PC-9 (cell line): ENCODE measurements at regions of chr17 and their contacts with region 1.

Region 1: GRCh38 chr17:44385287-44386181 is 3.9 kb downstream of the ITGA2B start:
- DNase-seq: peak; percentile 57 to 86
- H3K4me3 ChIP-seq: peak overlapping the region; percentile 63
- H3K27ac ChIP-seq: no peak overlapping the region
- H3K4me1 ChIP-seq: no peaks in the 10 kb centered on the region
- H3K27me3 ChIP-seq: no peaks in the 10 kb centered on the region
- CTCF ChIP-seq: no peak

Region 2: DNA sequence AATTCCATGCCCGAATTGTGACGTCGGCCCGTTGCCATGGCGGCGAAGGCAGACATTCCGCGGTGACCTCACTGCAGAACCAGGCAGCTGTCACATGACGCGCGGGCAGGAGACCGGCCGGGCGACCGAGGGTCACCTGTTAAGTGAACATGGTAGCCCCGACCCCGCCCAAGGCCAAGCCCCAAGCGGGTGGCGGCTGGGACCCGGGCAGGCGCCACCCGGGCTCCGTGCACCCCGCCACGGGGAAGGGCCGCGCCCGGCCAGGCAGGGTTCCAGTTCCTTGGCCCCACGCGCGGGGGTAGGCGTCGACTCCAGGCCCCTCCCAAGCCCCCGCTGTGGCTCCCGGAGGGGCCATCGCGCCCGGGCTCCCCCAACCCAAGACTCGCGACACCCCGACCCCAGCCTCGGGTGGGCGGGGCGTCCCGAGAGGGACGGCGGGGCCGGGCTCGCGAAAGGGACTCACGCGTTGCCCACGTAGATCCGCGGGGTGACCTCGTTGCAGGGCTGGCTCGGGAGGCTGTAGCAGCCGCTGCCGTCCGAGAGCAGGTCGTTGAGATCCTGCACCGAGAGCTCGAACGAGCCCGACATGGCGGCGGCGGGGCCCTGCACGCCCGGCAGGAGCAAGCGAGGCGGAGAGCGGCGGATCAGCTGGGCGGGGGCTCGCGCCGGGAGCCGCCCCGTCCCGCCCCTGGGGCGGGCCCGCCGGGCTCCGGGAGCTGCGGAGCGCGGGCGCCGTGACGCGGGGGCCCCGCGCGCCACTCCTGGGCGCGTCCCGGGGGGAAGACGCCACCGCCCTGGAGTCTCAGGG is 607.0 kb before region 1 on chr17 and contains the start of gene DUSP3:
- CTCF ChIA-PET with region 1: no interaction called
- POLR2A ChIA-PET with region 1: interaction called, 13 read pairs
- intact Hi-C with region 1: no loop called
- DNase-seq: peak; percentile 89 to 94
- H3K4me3 ChIP-seq: peak within 1 kb of the TSS; percentile 81
- H3K27ac ChIP-seq: peak within 1 kb of the TSS; percentile 76
- H3K4me1 ChIP-seq: peaks cover 14% of the 10 kb centered on the region
- H3K27me3 ChIP-seq: peaks cover 20% of the 10 kb centered on the region; the same call in 1 of the 2 replicates
- CTCF ChIP-seq: no peak
- total RNA-seq, gene DUSP3: 37.2 and 38.4 TPM in 2 replicates

Region 3: GRCh38 chr17:43958953-43959352 is 426.6 kb before region 1 on chr17:
- CTCF ChIA-PET with region 1: no interaction called
- POLR2A ChIA-PET with region 1: interaction called, 22 read pairs
- intact Hi-C with region 1: no loop called
- DNase-seq: peak in 1 of 2 experiments; percentile 47
- H3K4me3 ChIP-seq: no peak overlapping the region
- H3K27ac ChIP-seq: no peak overlapping the region
- H3K4me1 ChIP-seq: no peaks in the 10 kb centered on the region
- H3K27me3 ChIP-seq: peaks cover 8% of the 10 kb centered on the region; the same call in 1 of the 2 replicates
- CTCF ChIP-seq: no peak

Region 4: GRCh38 chr17:44363613-44364159 is 21.8 kb before region 1 on chr17 and contains the start of gene FAM171A2:
- CTCF ChIA-PET with region 1: interaction called, 12 read pairs
- POLR2A ChIA-PET with region 1: no interaction called
- intact Hi-C with region 1: no loop called
- DNase-seq: peak in 1 of 2 experiments; percentile 61
- H3K4me3 ChIP-seq: peak within 1 kb of the TSS; percentile 66
- H3K27ac ChIP-seq: no peak within 1 kb of the TSS
- H3K4me1 ChIP-seq: no peaks in the 10 kb centered on the region
- H3K27me3 ChIP-seq: peaks cover 18% of the 10 kb centered on the region; the same call in 1 of the 2 replicates
- CTCF ChIP-seq: peak; percentile 59; the same call in 1 of the 2 replicates
- total RNA-seq, gene FAM171A2: 8.3 and 11.8 TPM in 2 replicates

Region 5: DNA sequence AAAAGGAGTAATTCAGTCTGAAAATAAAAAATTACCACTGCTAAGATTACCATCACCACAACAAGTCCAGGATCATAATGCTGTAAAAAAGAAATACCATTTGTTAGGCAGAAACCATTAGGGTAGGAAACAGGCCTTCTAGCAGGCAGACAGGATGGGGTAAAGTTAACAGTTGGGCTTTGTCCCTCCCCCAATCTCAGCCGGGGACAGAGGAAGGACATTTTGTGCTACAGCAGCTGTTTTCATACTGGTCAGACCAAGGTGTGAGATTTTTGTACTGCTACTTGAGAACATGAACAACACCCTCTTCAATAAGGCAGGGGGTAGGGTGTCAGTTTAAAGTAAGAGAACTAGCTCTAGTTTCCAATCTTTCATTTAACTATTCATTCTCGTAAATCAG is 53.1 kb after region 1 on chr17:
- CTCF ChIA-PET with region 1: no interaction called
- POLR2A ChIA-PET with region 1: no interaction called
- intact Hi-C with region 1: no loop called
- DNase-seq: no peak
- H3K4me3 ChIP-seq: no peak overlapping the region
- H3K27ac ChIP-seq: no peak overlapping the region
- H3K4me1 ChIP-seq: no peaks in the 10 kb centered on the region
- H3K27me3 ChIP-seq: no peaks in the 10 kb centered on the region
- CTCF ChIP-seq: no peak